ENCODE measurements at regions of chr11 and their contacts with region 1.

Region 1: DNA sequence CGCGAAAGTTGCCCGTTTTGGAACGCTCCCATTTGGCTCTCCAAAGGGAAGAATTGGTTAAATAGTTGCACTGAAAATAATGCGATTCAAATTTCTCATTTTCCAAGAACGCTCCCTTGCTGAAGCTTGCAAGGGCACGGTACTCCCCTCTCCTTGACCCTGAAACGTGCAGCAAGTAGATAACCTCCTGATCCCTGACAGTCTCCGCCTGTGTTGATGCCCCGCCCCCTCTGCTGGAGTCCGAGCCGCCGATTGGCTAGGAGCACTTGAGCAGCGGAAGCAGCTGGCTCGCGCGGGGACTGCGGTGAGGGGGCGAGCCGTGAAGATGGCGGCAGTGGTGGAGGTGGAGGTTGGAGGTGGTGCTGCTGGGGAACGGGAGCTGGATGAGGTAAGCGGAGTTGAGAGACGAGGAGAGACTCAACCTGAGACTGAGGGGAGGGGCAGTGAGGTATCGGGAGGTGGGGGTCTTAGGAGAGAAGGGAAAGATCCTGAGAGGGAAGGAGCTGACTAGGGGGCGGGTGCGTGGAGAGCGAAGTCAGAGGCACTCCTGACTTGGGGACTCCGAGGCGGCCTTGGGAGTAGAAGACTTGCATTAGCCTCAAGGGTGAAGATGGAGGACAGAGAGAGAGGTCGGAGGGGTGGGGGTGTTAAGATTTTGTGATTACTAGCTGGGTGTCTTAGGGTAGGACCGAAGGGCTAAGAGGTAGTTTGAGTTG is at the start of gene RNF121:
- DNase-seq: peak; percentile 98
- ATAC-seq: peak; percentile 99
- total RNA-seq, gene RNF121: 23.0 TPM

Region 2: GRCh38 chr11:71433648-71434450 is 495.0 kb before region 1 on chr11:
- intact Hi-C with region 1: loop called (anchors 10 kb)
- DNase-seq: peak; percentile 84
- ATAC-seq: peak; percentile 65

Region 3: GRCh38 chr11:71787098-71787823 is 141.6 kb before region 1 on chr11:
- intact Hi-C with region 1: loop called (anchors 5 kb)
- DNase-seq: peak; percentile 97
- ATAC-seq: peak; percentile 100

Measured in Right ventricle myocardium inferior (tissue), 1 donor.